ENCODE measurements at regions of chr1 and their contacts with region 1.

Region 1: GRCh38 chr1:47992720-47993415 is 4.3 kb downstream of the TRABD2B start:
- DNase-seq: peak in 1 of 2 donors; percentile 34
- H3K4me3 ChIP-seq: peak overlapping the region in 1 of 3 donors; percentile 47
- H3K27ac ChIP-seq: peak overlapping the region; percentile 29 to 52
- H3K4me1 ChIP-seq: no peaks in the 10 kb centered on the region
- H3K27me3 ChIP-seq: no peaks in the 10 kb centered on the region
- CTCF ChIP-seq: no peak
- POLR2A ChIP-seq: no peak

Region 2: DNA sequence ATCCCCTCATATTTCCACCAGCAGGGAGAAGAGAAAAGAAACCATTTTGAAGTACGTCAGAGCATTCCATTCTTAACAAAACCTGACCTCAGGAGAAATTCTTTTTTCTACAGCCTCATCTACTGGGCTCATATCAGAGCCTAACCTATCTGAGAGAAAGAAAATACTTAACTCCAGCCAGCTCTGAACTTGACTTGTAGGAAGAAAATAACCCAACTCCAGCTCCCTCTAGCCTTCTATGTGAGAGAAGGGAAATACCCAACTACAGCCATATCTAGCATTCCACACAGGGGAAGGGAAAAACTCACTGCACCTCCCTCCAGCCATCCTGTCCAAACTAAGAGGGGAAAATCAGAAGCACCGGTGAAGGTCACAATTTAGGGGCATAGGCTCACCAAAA is 421.4 kb after region 1 on chr1:
- intact Hi-C with region 1: loop called (anchors 5 kb)
- DNase-seq: no peak
- H3K4me3 ChIP-seq: no peak overlapping the region
- H3K27ac ChIP-seq: no peak overlapping the region
- H3K4me1 ChIP-seq: no peaks in the 10 kb centered on the region
- H3K27me3 ChIP-seq: no peaks in the 10 kb centered on the region
- CTCF ChIP-seq: no peak
- POLR2A ChIP-seq: no peak

Measured in breast epithelium (tissue), 4 donors.